ENCODE measurements at regions of chr12 and their contacts with region 1.

Region 1: DNA sequence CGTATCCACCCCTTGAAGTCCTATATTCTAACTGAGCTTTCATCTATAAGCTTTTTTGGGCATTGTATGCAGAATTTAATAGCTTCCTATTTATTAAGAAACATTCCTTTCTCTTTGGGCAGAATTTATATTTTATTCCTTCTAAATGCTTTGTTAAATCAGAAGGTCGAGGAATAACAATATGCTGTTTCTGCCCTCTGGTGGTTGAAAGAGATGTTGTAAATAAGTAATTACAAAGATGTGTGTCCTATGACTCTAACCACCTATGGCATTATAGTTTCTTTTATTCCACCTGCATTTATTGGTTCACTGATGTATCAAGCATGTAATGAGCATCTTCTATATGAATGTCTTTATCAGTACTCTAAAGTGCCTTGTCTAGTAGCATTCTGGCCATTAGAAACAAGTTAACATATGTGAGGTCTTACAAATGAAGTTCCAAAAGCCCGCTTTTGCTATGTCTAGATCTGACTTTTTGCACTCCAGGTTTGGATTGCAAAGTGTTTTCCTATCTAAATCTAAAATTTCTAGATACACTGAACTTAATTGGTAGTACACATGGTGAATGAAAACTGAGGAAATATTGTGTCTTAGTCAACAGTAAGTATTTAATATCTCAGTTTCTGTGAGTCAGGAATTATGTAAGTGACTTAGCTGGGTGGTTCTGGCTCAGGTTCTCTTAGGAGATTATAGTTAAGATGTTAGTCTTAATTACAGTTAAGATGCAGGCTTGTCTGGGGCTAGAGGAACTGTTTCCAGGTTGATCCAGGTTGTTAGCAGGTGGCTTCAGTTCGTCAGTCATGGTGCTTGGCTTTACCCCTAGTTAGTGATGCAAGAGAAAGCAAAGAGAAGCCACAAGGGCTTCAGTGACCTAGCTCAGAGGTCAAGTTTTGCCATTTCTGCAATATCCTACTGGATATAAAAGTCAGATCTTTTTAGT is 57.5 kb downstream of the PLEKHA5 start:
- DNase-seq: no peak
- ATAC-seq: peak; percentile 52

Region 2: DNA sequence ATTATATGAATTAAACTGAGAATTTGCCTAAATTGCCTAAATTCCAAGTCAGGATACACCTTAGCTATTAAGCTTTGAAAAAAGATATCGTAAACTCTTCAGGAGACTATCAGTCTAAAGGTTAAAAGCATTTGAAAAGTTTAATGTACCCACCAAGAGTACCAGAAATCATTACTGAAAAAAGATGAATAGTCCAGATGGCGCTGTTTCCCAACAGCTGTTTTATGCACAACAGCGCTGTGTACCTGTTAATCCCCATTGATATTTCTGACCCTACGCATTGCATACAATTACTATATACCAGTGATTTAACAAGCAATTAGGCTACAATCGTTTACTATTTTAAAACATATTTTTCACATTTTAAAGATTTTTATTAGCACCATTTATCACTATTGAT is 634.2 kb before region 1 on chr12:
- intact Hi-C with region 1: loop called (anchors 10 kb)
- DNase-seq: no peak
- ATAC-seq: no peak

Region 3: GRCh38 chr12:18861287-18861858 is 325.6 kb before region 1 on chr12:
- intact Hi-C with region 1: loop called (anchors 5 kb)
- DNase-seq: no peak
- ATAC-seq: no peak

Region 4: DNA sequence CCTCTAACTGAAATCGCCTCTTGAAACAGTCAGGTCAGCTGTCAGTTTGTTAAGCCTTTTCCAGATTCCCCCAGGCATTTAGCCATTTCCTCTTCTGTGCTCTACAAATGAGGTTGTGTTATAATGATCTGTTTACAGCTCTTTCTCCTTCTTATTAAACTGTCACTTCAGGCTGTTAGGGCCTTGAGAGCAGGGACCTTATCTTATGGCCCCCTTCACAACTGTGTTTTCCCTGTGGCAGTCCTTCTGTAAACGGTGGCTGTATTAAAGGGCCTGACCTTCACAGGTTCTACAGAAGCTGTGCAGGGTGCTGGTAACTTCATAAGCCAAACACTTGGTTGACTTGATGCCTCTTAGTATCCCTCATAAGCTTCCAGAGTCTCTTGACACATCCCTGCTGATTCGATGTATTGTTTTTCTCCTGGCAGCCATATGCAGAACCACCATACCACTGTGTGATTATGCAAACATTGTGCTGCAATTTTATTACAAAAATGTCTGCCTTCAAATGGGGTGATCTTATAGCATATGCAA is 47.2 kb after region 1 on chr12:
- intact Hi-C with region 1: loop called (anchors 5 kb)
- DNase-seq: no peak
- ATAC-seq: peak; percentile 55

Region 5: GRCh38 chr12:19439059-19440018 is 252.3 kb after region 1 on chr12 and contains the start of gene AEBP2:
- intact Hi-C with region 1: no loop called
- DNase-seq: peak; percentile 97
- ATAC-seq: peak; percentile 98
- total RNA-seq, gene AEBP2: 27.8 TPM

Region 6: GRCh38 chr12:20024194-20024593 is 837.2 kb after region 1 on chr12:
- intact Hi-C with region 1: no loop called
- DNase-seq: no peak
- ATAC-seq: peak; percentile 88